Gastrocnemius medialis (tissue), 4 donors: ENCODE measurements at regions of chr11 and their contacts with region 1.

Region 1: DNA sequence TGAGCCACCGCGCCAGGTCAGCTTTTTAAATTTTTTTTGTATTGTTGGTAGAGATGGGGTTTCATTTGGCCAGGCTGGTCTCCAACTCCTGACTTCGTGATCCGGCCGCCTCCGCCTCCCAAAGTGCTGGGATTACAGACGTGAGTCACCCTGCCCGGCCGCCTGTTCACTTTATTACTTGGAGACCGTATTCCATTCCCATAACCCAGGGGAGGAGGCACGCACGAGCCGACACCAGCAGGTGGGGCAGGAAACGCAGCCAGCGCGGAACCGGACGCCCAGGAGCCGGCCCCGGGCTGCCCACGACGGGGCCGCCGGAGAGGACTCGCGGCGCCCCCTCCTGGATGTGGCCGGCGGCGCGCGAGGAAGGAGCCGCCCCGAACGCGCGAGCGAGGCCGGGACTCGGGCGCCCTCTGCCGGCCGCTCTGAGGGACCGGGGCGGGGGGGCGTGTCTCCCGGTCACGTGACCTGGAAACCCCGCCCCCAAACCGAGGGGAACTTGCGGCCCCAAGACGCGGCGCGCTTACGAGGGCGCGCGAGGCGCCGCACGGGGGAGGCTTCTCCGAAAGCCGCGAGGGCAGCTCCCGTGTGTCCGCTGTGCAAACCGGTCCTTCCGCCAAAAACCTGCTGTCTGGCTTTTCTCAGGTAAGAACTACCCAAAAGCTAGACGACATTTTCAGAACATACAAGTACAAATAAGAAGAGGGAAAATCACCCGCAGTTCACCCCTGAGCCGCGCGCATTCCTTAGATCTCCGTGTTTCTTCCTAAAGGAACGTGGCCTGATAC is 11.6 kb upstream of the RNH1 start:
- DNase-seq: peak; percentile 91 to 98
- ATAC-seq: peak; percentile 96 to 97
- H3K4me3 ChIP-seq: peak overlapping the region; percentile 37 to 51 (median 44)
- H3K27ac ChIP-seq: peak overlapping the region; percentile 90 to 97 (median 94)
- H3K4me1 ChIP-seq: peaks cover 0 to 4% of the 10 kb centered on the region in 2 donors
- H3K27me3 ChIP-seq: no peaks in the 10 kb centered on the region
- CTCF ChIP-seq: peak; percentile 85 to 100 (median 100)
- POLR2A ChIP-seq: peak; percentile 30 to 60

Region 2: GRCh38 chr11:236774-237767 is 281.6 kb before region 1 on chr11 and contains the start of gene PSMD13:
- in situ Hi-C with region 1: no loop called
- intact Hi-C with region 1: loop called (anchors 1 kb)
- DNase-seq: peak; percentile 57 to 78
- ATAC-seq: peak; percentile 87 to 91
- H3K4me3 ChIP-seq: peak within 1 kb of the TSS; percentile 88 to 100 (median 98)
- H3K27ac ChIP-seq: peak within 1 kb of the TSS; percentile 97 to 99 (median 97)
- H3K4me1 ChIP-seq: peaks cover 42 to 43% of the 10 kb centered on the region in 2 donors
- H3K27me3 ChIP-seq: no peaks in the 10 kb centered on the region
- CTCF ChIP-seq: no peak
- POLR2A ChIP-seq: peak; percentile 71 to 94
- total RNA-seq, gene PSMD13: 128 to 189 (median 163) TPM

Region 3: GRCh38 chr11:406978-407739 is 111.5 kb before region 1 on chr11:
- in situ Hi-C with region 1: no loop called
- intact Hi-C with region 1: loop called (anchors 1 kb)
- DNase-seq: peak; percentile 40 to 69
- ATAC-seq: peak; percentile 67 to 79
- H3K4me3 ChIP-seq: peak overlapping the region; percentile 57 to 85 (median 67)
- H3K27ac ChIP-seq: peak overlapping the region; percentile 47 to 76 (median 59)
- H3K4me1 ChIP-seq: peaks cover 0 to 10% of the 10 kb centered on the region in 2 donors
- H3K27me3 ChIP-seq: peaks cover 3 to 41% (median 4%) of the 10 kb centered on the region in 3 donors
- CTCF ChIP-seq: no peak
- POLR2A ChIP-seq: no peak

Region 4: GRCh38 chr11:447923-448731 is 70.5 kb before region 1 on chr11:
- in situ Hi-C with region 1: loop called in 2 of 4 experiments (anchors 10 kb)
- intact Hi-C with region 1: loop called (anchors 1 kb)
- DNase-seq: peak; percentile 88 to 90
- ATAC-seq: peak; percentile 82 to 85
- H3K4me3 ChIP-seq: peak overlapping the region; percentile 66 to 94 (median 85)
- H3K27ac ChIP-seq: peak overlapping the region; percentile 84 to 98 (median 96)
- H3K4me1 ChIP-seq: peaks cover 22 to 25% of the 10 kb centered on the region in 2 donors
- H3K27me3 ChIP-seq: peaks cover 0 to 10% (median 6%) of the 10 kb centered on the region in 3 donors
- CTCF ChIP-seq: peak; percentile 68 to 90 (median 80)
- POLR2A ChIP-seq: peak; percentile 78 to 80

Region 5: DNA sequence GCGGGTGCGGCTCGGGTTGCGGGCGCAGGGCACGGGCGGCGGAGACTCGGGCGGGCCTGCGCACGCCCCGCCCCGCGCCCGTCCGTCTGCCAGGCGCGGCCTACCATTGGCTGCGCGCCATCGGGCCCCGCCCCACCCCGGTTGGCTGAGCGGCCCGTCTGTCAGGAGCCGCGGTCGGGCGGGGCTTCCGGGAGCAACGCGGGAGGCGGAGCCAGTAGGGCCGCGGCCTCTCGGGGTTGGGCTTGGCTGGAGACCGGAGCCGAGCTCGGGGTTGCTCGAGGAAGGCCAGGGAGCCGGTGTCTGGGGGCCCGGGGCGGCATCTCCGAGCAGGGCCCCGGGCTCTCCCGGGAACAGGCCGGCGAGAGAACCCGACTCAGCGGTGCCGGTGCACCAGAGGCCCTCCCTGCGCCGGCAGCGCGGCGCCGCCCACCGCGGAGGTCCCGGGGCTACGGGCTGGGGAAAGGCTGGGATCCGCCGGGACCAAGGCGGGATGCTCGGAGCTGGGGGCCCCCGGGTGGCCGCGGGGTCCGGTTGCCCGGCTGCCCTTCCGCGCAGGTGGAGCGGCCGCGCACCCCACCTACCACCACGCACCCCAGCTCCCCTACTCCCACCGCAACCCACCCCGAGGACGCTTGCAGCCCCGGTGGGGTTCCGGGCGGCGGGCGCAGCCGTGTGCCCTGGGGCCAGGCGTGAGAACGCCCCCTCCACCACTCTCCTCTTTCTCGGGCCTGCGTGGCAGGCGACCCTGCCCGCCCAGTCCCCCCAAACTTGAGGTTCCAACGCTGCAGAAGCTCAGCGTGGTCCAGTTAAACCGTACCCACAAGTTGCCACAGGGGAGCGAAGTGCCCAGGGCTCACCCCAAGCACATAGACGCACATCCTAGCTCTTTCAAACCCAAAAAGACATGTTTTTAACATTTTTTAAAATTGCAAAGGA is 17.1 kb after region 1 on chr11 and contains the start of gene HRAS:
- in situ Hi-C with region 1: no loop called
- intact Hi-C with region 1: loop called (anchors 2 kb)
- DNase-seq: peak; percentile 91 to 92
- ATAC-seq: peak; percentile 84 to 88
- H3K4me3 ChIP-seq: peak within 1 kb of the TSS; percentile 75 to 82 (median 78)
- H3K27ac ChIP-seq: peak within 1 kb of the TSS; percentile 80 to 92 (median 90)
- H3K4me1 ChIP-seq: peaks cover 18 to 29% of the 10 kb centered on the region in 2 donors
- H3K27me3 ChIP-seq: peaks cover 21 to 25% (median 25%) of the 10 kb centered on the region in 3 donors
- CTCF ChIP-seq: no peak
- POLR2A ChIP-seq: peak; percentile 63 to 73
- total RNA-seq, gene HRAS: 17.1 to 50.0 (median 37.6) TPM

Region 6: GRCh38 chr11:560305-561147 is 41.9 kb after region 1 on chr11 and contains the starts of genes LMNTD2 and RASSF7:
- in situ Hi-C with region 1: no loop called
- intact Hi-C with region 1: loop called (anchors 1 kb)
- DNase-seq: peak; percentile 82 to 89
- ATAC-seq: peak; percentile 93 to 97
- H3K4me3 ChIP-seq: peak within 1 kb of the TSS; percentile 66 to 92 (median 75)
- H3K27ac ChIP-seq: peak within 1 kb of the TSS in 3 of 4 donors; percentile 46 to 63 (median 54)
- H3K4me1 ChIP-seq: peaks cover 5 to 10% of the 10 kb centered on the region in 2 donors
- H3K27me3 ChIP-seq: peaks cover 26 to 28% (median 26%) of the 10 kb centered on the region in 3 donors
- CTCF ChIP-seq: no peak
- POLR2A ChIP-seq: peak in 1 of 2 donors; percentile 33
- total RNA-seq, gene LMNTD2: 0.13 to 1.5 TPM in 2 of 4 donors, not detected in the others
- total RNA-seq, gene RASSF7: 0.56 to 2.4 (median 0.70) TPM